ENCODE measurements at regions of chr12 and their contacts with region 1.

Region 1: DNA sequence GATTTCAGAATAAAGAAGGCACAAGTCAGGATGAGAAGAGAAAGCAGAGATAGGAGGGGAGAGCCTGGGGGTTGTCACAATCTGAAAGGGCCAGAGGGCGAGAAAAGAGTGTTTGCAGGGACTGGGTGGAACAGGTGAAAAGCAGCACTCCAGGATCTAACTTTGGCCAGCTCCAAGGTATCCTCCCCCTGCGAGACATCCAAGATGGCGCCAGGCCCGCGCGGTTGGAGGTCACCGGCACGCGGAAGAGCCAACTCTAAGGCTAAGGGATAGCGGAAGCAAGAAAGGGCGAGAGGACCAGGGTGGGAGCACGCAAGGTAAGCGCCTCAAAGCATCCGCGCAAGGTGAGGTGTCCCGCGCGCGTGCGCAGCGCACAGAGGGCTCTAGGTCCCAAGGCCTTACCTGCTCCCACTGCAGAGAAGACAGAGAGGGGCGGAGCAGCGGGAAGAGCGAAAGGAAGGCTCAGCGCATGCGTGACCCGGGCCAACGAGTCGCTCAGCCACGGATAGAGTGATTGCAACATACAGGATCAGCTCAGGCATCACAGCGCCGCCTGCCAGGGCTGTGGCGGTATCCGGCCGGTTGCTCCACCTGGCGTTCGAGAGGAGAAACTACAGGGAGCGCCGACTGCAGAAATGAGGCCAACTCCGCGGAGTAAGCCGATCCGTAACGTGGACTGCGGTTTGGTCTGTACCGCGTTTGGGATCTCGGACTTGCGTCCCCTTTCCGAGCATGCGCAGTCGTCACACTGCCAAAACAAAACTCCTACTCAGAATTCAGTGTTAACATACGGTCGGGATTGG is at the start of gene ATP5MC2:
- DNase-seq: peak; percentile 98
- H3K4me3 Mint-ChIP-seq: peak within 1 kb of the TSS; percentile 95
- H3K27ac Mint-ChIP-seq: peak within 1 kb of the TSS; percentile 91
- H3K4me1 Mint-ChIP-seq: peaks cover 32% of the 10 kb centered on the region
- H3K27me3 Mint-ChIP-seq: peaks cover 13% of the 10 kb centered on the region
- total RNA-seq, gene ATP5MC2: 443 to 466 TPM

Region 2: GRCh38 chr12:53508534-53509199 is 167.2 kb before region 1 on chr12:
- CTCF ChIA-PET with region 1: interaction called, 13 read pairs
- intact Hi-C with region 1: no loop called
- DNase-seq: peak; percentile 93
- H3K4me3 Mint-ChIP-seq: no peak overlapping the region
- H3K27ac Mint-ChIP-seq: peak overlapping the region; percentile 10
- H3K4me1 Mint-ChIP-seq: peaks cover 11% of the 10 kb centered on the region
- H3K27me3 Mint-ChIP-seq: no peaks in the 10 kb centered on the region

Region 3: GRCh38 chr12:53561590-53561953 is 114.3 kb before region 1 on chr12:
- CTCF ChIA-PET with region 1: interaction called, 8 read pairs
- intact Hi-C with region 1: loop called (anchors 1 kb)
- DNase-seq: no peak
- H3K4me3 Mint-ChIP-seq: no peak overlapping the region
- H3K27ac Mint-ChIP-seq: peak overlapping the region; percentile 81
- H3K4me1 Mint-ChIP-seq: peaks cover 67% of the 10 kb centered on the region
- H3K27me3 Mint-ChIP-seq: no peaks in the 10 kb centered on the region

Region 4: DNA sequence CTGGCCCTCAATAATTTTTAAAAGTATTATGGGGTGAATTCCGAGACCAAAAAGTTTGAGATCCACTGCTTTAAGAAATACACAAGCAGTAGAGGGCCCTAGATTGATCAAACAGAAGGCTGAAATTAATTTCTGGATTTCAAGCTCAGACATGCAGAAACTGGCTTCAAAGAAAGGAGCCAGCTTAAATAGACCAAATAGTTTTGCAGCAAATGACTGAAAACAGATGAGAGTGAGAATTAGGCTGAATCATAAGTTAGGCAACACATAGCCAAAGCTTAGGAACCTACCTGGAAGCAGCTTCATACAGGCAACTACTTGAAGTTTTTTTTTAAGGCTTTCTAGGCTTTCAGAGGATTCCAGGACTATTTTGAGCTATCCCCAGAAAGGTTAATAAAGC is 62.0 kb before region 1 on chr12:
- CTCF ChIA-PET with region 1: interaction called, 4 read pairs
- intact Hi-C with region 1: loop called (anchors 1 kb)
- DNase-seq: no peak
- H3K4me3 Mint-ChIP-seq: no peak overlapping the region
- H3K27ac Mint-ChIP-seq: no peak overlapping the region
- H3K4me1 Mint-ChIP-seq: peaks cover 34% of the 10 kb centered on the region
- H3K27me3 Mint-ChIP-seq: no peaks in the 10 kb centered on the region

Region 5: GRCh38 chr12:53727310-53728041 is 51.6 kb after region 1 on chr12 and contains the start of gene CALCOCO1:
- CTCF ChIA-PET with region 1: interaction called, 4 read pairs
- intact Hi-C with region 1: loop called (anchors 1 kb)
- DNase-seq: peak; percentile 99
- H3K4me3 Mint-ChIP-seq: peak within 1 kb of the TSS; percentile 92
- H3K27ac Mint-ChIP-seq: peak within 1 kb of the TSS; percentile 87
- H3K4me1 Mint-ChIP-seq: peaks cover 16% of the 10 kb centered on the region
- H3K27me3 Mint-ChIP-seq: no peaks in the 10 kb centered on the region
- total RNA-seq, gene CALCOCO1: 8.1 to 8.3 TPM